Thyroid gland (tissue), 4 donors: ENCODE measurements at regions of chr1 and their contacts with region 1.

Region 1: DNA sequence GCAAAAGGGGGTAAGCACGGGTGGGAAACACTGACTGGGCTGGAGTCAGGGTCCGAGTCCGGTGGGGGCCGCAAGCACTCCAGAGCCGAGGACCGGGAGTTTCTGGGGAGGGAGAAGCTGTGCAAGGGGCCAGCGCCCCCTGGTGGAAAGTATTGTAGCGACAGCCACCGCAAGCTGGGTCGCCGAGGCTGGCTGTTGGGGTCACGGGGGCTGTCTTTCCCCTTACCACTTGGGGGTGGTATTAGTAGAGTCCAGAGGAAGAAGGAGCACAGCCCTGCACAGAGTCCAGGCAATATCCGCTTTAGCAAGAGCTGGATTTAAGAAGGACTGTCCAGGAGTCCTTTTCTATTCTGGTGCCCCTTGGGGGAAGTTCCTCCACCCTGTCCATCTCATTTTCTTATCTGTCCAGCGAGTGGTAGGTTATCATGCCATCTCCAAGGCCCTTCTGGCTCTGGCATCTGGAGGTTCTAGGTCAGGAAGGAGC is 17.9 kb upstream of the ETV3 start:
- DNase-seq: peak; percentile 64 to 67
- H3K4me3 ChIP-seq: peak overlapping the region in 1 of 3 donors; percentile 17
- H3K27ac ChIP-seq: no peak overlapping the region
- H3K4me1 ChIP-seq: peaks cover 7 to 20% of the 10 kb centered on the region in 2 donors
- H3K27me3 ChIP-seq: no peaks in the 10 kb centered on the region
- CTCF ChIP-seq: peak; percentile 86 to 97 (median 90)
- POLR2A ChIP-seq: no peak

Region 2: GRCh38 chr1:157090196-157090647 is 65.9 kb before region 1 on chr1:
- intact Hi-C with region 1: loop called (anchors 2 kb)
- DNase-seq: peak; percentile 84 to 89
- H3K4me3 ChIP-seq: no peak overlapping the region
- H3K27ac ChIP-seq: no peak overlapping the region
- H3K4me1 ChIP-seq: peaks cover 4 to 9% of the 10 kb centered on the region in 2 donors
- H3K27me3 ChIP-seq: no peaks in the 10 kb centered on the region
- CTCF ChIP-seq: peak; percentile 81 to 92 (median 86)
- POLR2A ChIP-seq: no peak